ENCODE measurements at regions of chr1 and their contacts with region 1.

Region 1: DNA sequence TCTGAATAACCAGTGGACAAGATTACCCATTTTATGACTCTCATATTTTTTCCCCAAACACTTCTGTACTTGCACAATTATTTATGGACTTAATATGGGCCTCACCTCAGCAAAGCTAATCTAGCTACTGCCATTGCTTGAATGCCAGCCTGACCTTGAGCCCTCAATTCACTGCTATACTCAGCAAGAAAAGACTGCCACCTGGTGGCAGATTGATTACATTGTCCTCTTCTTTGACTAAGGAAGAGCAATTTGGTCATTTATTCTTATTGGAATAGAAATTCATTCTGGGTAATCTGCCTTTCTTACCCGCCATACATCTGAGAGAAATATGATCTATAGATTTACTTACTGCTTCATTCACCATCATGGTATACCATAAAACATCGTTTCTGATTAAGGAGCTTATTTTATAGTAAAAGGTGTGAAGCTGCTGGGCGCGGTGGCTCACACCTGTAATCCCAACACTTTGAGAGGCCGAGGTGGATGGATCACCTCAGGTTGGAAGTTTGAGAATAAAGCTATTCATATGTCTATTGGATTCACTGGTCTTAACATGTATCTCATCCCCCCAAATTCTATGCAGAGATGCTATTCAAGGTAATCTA is 32.9 kb upstream of the DIPK1A start:
- DNase-seq: peak; percentile 59
- H3K4me3 ChIP-seq: no peak overlapping the region; a peak in 1 of 4 replicates
- H3K27ac ChIP-seq: no peak overlapping the region
- H3K4me1 ChIP-seq: no peaks in the 10 kb centered on the region; a peak in 1 of 4 replicates
- H3K27me3 ChIP-seq: no peaks in the 10 kb centered on the region
- CTCF ChIP-seq: peak; percentile 85
- EP300 ChIP-seq: no peak
- RAD21 ChIP-seq: peak; percentile 95

Region 2: GRCh38 chr1:92934395-92935378 is 59.5 kb before region 1 on chr1:
- CTCF ChIA-PET with region 1: interaction called, 14 read pairs
- POLR2A ChIA-PET with region 1: interaction called, 3 read pairs
- DNase-seq: peak; percentile 46
- H3K4me3 ChIP-seq: no peak overlapping the region
- H3K27ac ChIP-seq: peak overlapping the region; percentile 65 to 85
- H3K4me1 ChIP-seq: peaks cover 18 to 31% of the 10 kb centered on the region in 2 experiments; a peak in 3 of 4 replicates
- H3K27me3 ChIP-seq: no peaks in the 10 kb centered on the region
- CTCF ChIP-seq: no peak
- EP300 ChIP-seq: peak; percentile 90 to 97
- RAD21 ChIP-seq: peak; percentile 16; the same call in 1 of the 2 replicates

Region 3: GRCh38 chr1:92975551-92976232 is 18.5 kb before region 1 on chr1:
- CTCF ChIA-PET with region 1: interaction called, 27 read pairs
- POLR2A ChIA-PET with region 1: no interaction called
- DNase-seq: no peak
- H3K4me3 ChIP-seq: no peak overlapping the region
- H3K27ac ChIP-seq: no peak overlapping the region
- H3K4me1 ChIP-seq: no peaks in the 10 kb centered on the region
- H3K27me3 ChIP-seq: no peaks in the 10 kb centered on the region; the same call in 1 of the 2 replicates
- CTCF ChIP-seq: no peak
- EP300 ChIP-seq: no peak
- RAD21 ChIP-seq: no peak

Region 4: GRCh38 chr1:93007941-93008577 is 13.8 kb after region 1 on chr1:
- CTCF ChIA-PET with region 1: interaction called, 26 read pairs
- POLR2A ChIA-PET with region 1: no interaction called
- DNase-seq: no peak
- H3K4me3 ChIP-seq: no peak overlapping the region
- H3K27ac ChIP-seq: no peak overlapping the region
- H3K4me1 ChIP-seq: no peaks in the 10 kb centered on the region
- H3K27me3 ChIP-seq: no peaks in the 10 kb centered on the region
- CTCF ChIP-seq: no peak
- EP300 ChIP-seq: no peak
- RAD21 ChIP-seq: no peak

Measured in SK-N-SH (cell line).